ENCODE measurements at regions of chr5 and their contacts with region 1.

Region 1: DNA sequence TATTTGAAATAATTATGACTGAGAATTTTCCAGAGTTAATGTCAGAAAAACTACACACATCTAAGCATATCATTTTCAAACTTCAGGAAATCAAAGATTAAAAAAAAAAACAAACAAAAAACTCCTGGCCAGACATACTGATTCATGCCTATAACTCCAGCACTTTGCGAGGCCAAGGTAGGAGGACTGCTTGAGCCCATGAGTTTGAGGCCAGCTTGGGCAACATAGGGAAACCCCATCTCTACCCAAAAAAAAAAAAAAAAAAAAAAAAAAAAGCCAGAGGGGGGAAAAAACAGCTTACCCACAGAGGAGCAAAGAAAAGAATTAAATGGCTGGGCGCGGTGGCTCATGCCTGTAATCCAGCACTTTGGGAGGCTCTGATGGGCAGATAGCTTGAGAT is 22.4 kb downstream of the EFCAB9 start:
- DNase-seq: no peak
- ATAC-seq: no peak
- H3K4me3 ChIP-seq: no peak overlapping the region
- H3K27ac ChIP-seq: no peak overlapping the region
- H3K4me1 ChIP-seq: no peaks in the 10 kb centered on the region
- H3K27me3 ChIP-seq: no peaks in the 10 kb centered on the region
- CTCF ChIP-seq: no peak

Region 2: DNA sequence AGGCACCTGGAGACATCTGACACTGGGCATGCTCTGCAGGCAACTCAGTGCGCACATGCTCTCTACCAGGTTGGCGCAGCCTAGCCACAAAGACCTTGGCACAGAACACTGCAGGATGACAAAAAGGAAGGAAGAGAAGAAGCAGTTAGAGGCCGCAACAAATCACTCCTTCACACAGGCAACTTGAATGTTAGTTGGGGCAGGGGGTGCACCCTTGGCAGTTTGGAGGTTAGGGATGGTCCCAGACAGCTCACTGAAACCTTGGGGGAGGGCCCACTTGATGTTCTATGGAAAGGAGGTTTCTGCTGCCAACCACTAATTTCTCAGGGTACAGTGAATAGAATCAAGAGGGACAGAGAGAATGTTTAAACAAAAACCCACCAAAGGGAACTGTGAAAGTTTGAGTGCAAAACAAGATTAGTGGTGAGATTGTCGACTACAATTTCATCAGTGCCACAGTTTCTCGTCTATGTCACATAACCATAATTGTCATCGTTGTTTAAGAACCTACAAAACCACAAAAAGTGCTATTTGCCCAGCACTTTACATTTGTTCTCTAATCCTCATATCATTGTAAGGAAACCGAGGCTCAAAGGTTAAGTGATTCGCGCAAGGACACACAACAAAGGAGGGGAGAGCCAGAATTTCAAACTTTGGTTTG is 258.6 kb before region 1 on chr5:
- CTCF ChIA-PET with region 1: no interaction called
- POLR2A ChIA-PET with region 1: no interaction called
- in situ Hi-C with region 1: no loop called
- intact Hi-C with region 1: no loop called
- DNase-seq: no peak
- ATAC-seq: no peak
- H3K4me3 ChIP-seq: 0 out of 4 replicates have a peak overlapping the region, but pooled peaks of 1 of the 2 experiments have one; percentile 16
- H3K27ac ChIP-seq: peak overlapping the region; percentile 95
- H3K4me1 ChIP-seq: peaks cover 82% of the 10 kb centered on the region
- H3K27me3 ChIP-seq: no peaks in the 10 kb centered on the region
- CTCF ChIP-seq: no peak

Region 3: DNA sequence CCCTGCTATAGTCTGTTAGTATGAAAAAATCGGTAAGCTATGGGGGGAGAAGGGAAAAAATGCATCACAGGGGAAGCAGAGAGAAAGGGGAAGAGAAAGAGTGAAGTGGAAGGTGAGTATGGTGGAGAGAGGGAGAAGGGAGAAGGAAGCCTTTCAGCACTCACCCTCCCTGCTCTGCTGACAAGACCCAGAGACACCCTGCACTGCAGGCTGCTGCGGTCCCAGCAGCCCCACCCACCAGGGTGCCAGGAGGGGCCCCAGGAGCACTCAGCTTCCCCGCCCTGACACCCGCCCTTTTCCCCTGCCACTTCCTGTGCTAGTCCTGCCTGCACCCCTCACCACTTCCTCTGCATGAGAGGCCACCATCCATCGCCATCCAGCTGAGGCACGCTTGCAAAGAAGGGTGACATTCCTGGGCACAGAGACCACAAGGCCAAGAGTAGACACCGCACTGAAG is 41.1 kb before region 1 on chr5:
- CTCF ChIA-PET with region 1: no interaction called
- POLR2A ChIA-PET with region 1: interaction called, 20 read pairs
- in situ Hi-C with region 1: no loop called
- intact Hi-C with region 1: no loop called
- DNase-seq: no peak
- ATAC-seq: no peak
- H3K4me3 ChIP-seq: no peak overlapping the region
- H3K27ac ChIP-seq: no peak overlapping the region
- H3K4me1 ChIP-seq: peaks cover 25% of the 10 kb centered on the region
- H3K27me3 ChIP-seq: no peaks in the 10 kb centered on the region
- CTCF ChIP-seq: no peak

Measured in Panc1 (cell line).